H1 (cell line): ENCODE measurements at regions of chr1 and their contacts with region 1.

Region 1: DNA sequence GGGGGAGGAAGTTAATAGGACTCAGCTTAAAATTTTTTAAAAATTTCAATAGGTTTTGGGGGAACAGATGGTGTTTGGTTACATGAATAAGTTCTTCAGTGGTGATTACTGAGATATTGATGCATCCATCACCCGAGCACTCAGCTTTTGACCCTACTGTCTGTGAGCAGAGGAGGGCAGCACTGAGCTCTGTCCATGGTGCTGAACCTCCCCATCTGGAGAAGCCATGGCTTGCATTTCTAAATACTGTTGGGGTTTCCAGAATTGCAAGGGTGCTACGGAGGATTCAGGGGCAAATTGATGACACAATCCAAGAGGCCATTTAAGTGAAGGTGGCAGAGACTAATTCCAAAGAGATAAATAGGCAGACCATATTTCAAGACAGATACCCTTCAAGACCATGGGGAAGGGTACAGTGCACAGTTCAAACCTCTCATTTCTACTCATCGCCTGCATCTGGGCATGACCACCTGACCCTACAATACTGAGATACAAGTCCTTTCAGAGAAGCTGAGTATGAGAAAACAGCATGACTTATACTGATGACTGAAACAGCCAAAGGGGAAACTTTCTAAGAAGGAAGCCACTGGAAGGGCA is 17.2 kb downstream of the SYT2 start:
- DNase-seq: peak in 1 of 2 experiments; percentile 90
- H3K4me3 ChIP-seq: no peak overlapping the region
- H3K27ac ChIP-seq: no peak overlapping the region
- H3K4me1 ChIP-seq: 0 out of 7 replicates have a peak, but pooled peaks cover 0 to 2% (median 0%) of the 10 kb centered on the region in 4 experiments
- H3K27me3 ChIP-seq: 0 out of 7 replicates have a peak, but pooled peaks cover 0 to 3% (median 0%) of the 10 kb centered on the region in 4 experiments
- CTCF ChIP-seq: peak; percentile 30 to 52 (median 49); a peak in 3 of 4 replicates
- EP300 ChIP-seq: no peak
- POLR2A ChIP-seq: no peak
- RAD21 ChIP-seq: peak in 1 of 2 experiments; percentile 39; a peak in 1 of 4 replicates

Region 2: DNA sequence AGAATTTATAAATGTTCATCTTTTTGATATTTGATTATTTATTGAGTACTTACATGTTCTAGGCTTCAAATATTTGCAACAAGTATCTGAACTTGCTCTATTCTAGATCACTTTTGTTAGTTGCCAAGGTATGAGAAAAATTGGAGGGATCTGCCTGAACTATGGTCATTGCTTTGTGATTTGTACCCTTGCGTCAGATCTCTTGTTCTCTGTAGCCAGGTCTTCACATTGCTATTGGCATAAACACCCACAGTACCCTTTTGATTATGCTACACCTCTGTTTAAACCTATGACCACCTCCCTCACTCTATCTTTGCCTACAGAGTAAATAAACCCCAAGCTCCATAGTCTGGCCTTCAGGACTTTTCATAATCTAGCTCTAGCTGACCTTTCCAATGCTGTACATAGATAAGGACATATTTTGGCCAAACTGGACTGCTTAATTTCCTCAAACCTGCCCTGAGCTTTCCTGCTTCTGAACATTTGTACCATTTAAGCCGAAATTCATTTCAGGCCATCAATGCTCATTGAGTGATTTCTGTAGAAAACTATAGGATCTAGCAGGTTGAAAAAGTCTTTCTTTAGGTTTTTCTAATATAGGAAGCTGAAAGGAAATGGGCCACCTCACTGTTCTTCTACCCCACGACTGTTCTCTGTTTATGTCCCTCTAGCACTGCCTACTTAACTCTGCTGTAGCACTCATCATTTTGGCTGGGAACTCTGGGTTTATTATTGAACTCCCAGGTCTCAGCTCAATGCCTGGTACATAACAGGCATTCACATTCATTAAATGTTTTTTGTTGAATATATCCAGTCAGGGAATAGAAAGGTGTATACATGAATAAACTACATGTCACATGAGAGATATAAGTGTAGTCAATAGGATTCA is 259.7 kb before region 1 on chr1:
- CTCF ChIA-PET with region 1: no interaction called
- POLR2A ChIA-PET with region 1: no interaction called
- DNase-seq: no peak
- H3K4me3 ChIP-seq: no peak overlapping the region
- H3K27ac ChIP-seq: no peak overlapping the region
- H3K4me1 ChIP-seq: no peaks in the 10 kb centered on the region
- H3K27me3 ChIP-seq: no peaks in the 10 kb centered on the region
- CTCF ChIP-seq: no peak
- EP300 ChIP-seq: no peak
- POLR2A ChIP-seq: no peak
- RAD21 ChIP-seq: no peak

Region 3: DNA sequence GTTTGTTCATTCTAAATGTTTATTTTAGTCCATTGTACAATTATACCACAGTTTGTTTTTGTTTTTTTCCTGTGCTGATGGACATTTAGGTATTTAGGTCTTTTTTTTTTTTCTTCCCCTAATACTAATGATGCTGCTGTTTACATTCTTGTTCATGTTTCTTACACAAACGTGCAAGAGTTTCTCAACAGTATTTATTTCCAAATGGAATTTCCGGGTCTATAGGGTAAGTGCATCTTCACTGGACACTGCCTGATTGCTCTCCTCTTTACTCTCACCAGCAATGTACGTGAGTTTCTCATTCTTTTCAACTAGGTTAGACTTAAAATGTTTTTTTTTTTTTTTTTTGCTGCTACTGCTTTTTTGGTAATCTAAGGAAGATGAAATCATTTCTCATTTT is 221.8 kb before region 1 on chr1:
- CTCF ChIA-PET with region 1: no interaction called
- POLR2A ChIA-PET with region 1: no interaction called
- DNase-seq: no peak
- H3K4me3 ChIP-seq: no peak overlapping the region
- H3K27ac ChIP-seq: no peak overlapping the region
- H3K4me1 ChIP-seq: no peaks in the 10 kb centered on the region
- H3K27me3 ChIP-seq: no peaks in the 10 kb centered on the region
- CTCF ChIP-seq: no peak
- EP300 ChIP-seq: no peak
- POLR2A ChIP-seq: no peak
- RAD21 ChIP-seq: no peak

Region 4: DNA sequence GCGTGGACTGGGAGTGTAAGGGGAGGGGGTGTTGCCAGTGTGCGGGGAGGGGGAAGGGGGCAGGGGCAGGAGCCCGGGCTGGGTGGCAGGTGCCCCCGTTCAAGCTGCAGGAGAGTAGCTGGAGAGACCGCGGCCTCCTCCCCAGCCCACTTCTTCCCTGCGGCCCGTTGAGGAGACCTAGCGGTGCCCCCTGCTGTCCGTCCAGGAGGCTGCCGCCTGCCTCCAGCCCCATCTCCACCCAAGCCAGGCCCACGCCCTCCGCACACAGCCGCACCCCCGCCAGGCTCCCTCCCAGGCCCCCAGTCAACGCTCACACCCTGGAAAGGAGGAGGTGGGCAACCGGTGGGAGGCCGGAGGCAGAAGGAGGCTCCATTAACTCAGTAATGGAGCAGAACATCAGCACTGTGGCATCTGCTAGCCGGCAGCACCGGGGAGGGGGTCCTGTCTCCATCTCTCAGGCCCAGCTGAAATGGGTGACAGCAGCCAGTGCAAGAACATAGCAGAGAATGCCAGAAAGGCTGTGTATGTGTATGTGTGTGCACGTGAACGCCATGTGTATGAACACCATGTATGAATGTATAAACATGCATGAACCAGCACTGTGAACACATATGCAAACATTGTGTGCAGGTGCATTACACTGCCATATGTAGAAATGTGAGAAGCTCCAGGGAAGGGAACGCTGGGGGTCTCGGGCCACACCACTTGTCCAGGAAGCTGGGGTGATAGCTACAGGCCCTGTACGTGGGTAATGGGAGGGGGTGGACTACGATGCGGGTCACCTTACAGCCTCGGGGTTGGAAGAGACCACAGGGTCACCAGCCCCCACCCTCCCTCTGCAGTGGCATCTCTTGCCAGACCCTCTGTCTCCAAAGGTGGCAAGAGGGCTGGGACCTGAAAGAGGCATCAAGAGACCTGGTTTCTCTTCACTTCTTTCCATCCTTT is 67.4 kb before region 1 on chr1:
- CTCF ChIA-PET with region 1: interaction called, 13 read pairs
- POLR2A ChIA-PET with region 1: no interaction called
- DNase-seq: peak; percentile 33 to 87
- H3K4me3 ChIP-seq: no peak overlapping the region
- H3K27ac ChIP-seq: no peak overlapping the region
- H3K4me1 ChIP-seq: peaks cover 0 to 13% (median 6%) of the 10 kb centered on the region in 4 experiments; a peak in 6 of 7 replicates
- H3K27me3 ChIP-seq: no peaks in the 10 kb centered on the region
- CTCF ChIP-seq: peak; percentile 61 to 82 (median 69)
- EP300 ChIP-seq: no peak
- POLR2A ChIP-seq: no peak
- RAD21 ChIP-seq: peak; percentile 63 to 74

Region 5: GRCh38 chr1:202680586-202681352 is 12.3 kb before region 1 on chr1:
- CTCF ChIA-PET with region 1: interaction called, 41 read pairs
- POLR2A ChIA-PET with region 1: interaction called, 6 read pairs
- DNase-seq: no peak
- H3K4me3 ChIP-seq: no peak overlapping the region; a peak in 1 of 8 replicates
- H3K27ac ChIP-seq: no peak overlapping the region
- H3K4me1 ChIP-seq: peaks cover 3 to 19% (median 6%) of the 10 kb centered on the region in 4 experiments; a peak in 5 of 7 replicates
- H3K27me3 ChIP-seq: no peaks in the 10 kb centered on the region
- CTCF ChIP-seq: no peak
- EP300 ChIP-seq: no peak
- POLR2A ChIP-seq: no peak
- RAD21 ChIP-seq: peak in 1 of 2 experiments; percentile 16; a peak in 2 of 4 replicates

Region 6: DNA sequence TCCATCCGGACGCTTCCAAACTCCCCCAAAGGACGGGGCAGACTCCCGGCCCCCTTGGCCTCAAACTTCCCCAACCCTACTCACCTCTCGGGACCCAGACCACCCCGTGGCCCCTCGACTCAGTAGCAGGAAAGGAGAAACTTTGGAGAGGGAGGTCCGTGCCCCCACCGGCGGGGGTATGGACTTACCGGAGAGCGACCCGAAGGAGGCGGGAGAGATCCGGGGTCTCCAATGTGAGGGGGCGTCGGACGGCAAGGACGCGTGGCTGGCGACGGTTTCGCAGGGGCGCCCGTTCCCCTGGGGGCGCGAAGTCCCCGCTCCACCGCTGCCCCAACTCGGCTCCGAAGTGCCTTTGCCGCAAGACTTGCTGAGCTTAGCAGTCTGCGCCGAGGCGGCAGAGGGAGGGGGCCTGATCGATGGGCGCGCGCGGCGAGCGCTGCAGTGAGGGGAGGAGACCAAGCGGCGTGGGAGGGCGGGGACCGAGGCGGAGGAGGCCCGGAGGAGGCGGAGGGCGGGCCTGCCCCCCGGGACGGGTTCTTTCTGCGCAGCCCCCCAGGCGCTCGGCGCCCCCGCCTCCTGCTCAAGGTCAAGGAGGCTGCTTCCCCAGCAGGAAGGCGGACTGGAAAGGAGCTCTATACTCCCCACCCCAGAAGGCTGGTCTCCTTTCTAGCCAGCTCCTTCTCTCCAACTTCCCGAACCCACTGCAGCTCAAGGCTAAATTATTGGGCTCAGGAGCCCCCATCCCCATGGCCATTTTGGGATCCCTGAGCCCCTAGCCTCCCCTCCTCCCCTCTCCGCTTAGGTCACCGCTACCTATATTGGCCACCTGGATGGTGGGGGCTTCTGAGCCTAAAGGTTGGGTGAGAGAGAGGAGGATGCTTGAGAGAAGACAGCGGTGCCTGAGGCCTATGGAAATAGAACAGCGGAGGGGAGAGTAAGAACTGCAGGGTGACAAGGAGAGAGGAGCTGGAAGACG is 17.3 kb after region 1 on chr1 and contains the start of gene SYT2:
- CTCF ChIA-PET with region 1: interaction called, 180 read pairs
- POLR2A ChIA-PET with region 1: interaction called, 5 read pairs
- DNase-seq: peak in 1 of 2 experiments; percentile 81
- H3K4me3 ChIP-seq: peak within 1 kb of the TSS; percentile 42 to 86 (median 66)
- H3K27ac ChIP-seq: no peak within 1 kb of the TSS
- H3K4me1 ChIP-seq: peaks cover 10 to 30% (median 21%) of the 10 kb centered on the region in 4 experiments
- H3K27me3 ChIP-seq: peaks cover 0 to 30% (median 19%) of the 10 kb centered on the region in 4 experiments; a peak in 5 of 7 replicates
- CTCF ChIP-seq: no peak
- EP300 ChIP-seq: no peak
- POLR2A ChIP-seq: no peak
- RAD21 ChIP-seq: no peak
- total RNA-seq, gene SYT2: 10.7 and 11.0 TPM in 2 replicates

Region 7: DNA sequence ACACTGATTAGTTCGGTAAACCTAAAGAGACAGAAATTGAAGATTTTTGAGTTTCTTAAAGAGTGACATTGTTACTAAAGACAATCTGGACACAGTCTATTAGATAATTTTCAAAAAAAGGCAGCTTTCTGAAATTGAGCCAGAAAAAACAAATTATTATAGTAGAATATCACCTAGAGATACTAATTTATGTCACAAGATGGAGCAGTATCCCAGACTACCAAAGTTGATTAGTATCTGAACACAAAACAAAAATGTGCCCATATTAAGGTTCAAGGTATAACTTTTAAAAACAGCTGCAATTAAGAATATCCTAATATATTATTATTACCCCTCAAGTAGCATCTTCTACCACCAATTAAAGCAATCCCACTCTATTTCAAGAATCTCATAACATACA is 57.7 kb after region 1 on chr1:
- CTCF ChIA-PET with region 1: no interaction called
- POLR2A ChIA-PET with region 1: no interaction called
- DNase-seq: no peak
- H3K4me3 ChIP-seq: no peak overlapping the region
- H3K27ac ChIP-seq: no peak overlapping the region
- H3K4me1 ChIP-seq: no peaks in the 10 kb centered on the region
- H3K27me3 ChIP-seq: no peaks in the 10 kb centered on the region
- CTCF ChIP-seq: no peak
- EP300 ChIP-seq: no peak
- POLR2A ChIP-seq: no peak
- RAD21 ChIP-seq: no peak

Region 8: DNA sequence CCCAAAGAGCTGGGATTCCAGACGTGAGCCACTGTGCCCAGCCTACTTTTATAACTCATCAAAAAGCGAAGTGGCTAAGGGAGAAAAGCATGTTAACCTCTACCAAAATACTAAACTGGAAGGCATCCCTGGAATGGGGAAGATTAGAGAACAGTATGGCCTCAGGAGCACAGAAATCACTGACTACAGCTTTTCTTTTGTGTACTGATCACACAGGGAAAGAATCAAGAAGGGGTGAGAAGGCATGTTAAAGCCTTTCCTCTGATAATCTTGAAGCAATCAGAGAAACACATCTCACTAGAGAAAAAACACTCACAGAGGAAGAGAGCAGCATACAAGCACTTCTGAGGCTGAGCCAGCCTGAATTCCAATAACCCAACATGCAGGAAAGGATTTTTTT is 128.4 kb after region 1 on chr1:
- CTCF ChIA-PET with region 1: no interaction called
- POLR2A ChIA-PET with region 1: no interaction called
- DNase-seq: no peak
- H3K4me3 ChIP-seq: no peak overlapping the region
- H3K27ac ChIP-seq: no peak overlapping the region
- H3K4me1 ChIP-seq: no peaks in the 10 kb centered on the region
- H3K27me3 ChIP-seq: no peaks in the 10 kb centered on the region
- CTCF ChIP-seq: no peak
- EP300 ChIP-seq: no peak
- POLR2A ChIP-seq: no peak
- RAD21 ChIP-seq: no peak